ENCODE measurements at regions of chr6 and their contacts with region 1.

Region 1: DNA sequence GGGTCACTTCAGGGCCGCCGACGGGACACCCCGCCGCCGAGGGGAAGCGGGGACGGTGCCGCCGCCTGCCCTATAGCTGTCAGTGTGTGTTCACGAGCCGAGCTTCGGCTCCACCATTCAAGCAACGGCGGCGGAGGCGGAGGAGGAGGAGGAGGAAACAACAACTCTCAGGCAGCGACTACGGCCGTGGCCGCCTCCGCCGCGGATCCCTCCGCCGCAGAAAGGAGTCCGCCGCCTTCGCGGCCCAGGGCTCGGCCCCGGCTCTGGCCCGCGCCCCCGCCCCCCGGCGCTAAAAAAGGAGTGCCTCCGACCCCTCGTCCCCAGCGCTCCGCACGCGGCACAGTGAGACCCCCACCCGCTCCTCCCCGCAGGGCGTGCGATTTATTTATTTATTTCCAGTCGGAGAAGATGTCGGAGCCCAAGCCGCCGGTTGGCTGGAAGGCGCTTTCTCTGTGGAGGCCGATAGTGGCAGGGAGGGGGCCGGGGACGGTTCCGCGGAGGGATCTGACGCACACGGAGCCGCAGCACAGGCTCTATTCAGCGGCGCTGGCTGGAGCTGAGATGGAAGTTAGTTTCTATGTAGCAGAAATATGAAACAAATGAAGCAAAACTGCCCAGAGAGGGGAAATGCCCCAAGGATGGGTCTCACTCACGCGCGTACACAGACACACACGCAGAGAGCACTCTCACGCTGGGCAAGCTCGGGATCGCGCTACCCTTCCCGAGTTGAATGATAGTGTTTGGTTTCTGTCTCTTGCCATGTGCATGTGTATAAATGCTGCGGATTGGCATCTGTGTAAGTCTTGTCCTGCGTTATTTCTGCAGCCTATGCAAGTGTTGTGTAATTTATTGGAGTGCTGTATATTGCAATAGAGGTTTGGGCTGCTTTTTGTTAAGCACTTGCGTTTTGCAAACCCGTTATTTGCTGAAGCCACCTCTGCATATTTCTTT is at the start of gene PHIP:
- DNase-seq: peak; percentile 93 to 95
- ATAC-seq: peak; percentile 91 to 98 (median 94)
- H3K4me3 ChIP-seq: peak within 1 kb of the TSS; percentile 82 to 92 (median 88)
- H3K27ac ChIP-seq: peak within 1 kb of the TSS; percentile 94 to 99 (median 98)
- H3K4me1 ChIP-seq: peaks cover 0 to 43% (median 40%) of the 10 kb centered on the region in 9 donors
- H3K27me3 ChIP-seq: no peaks in the 10 kb centered on the region
- CTCF ChIP-seq: peak in 2 of 9 donors; percentile 5 to 10
- total RNA-seq, gene PHIP: 10.6 to 17.3 (median 16.1) TPM

Region 2: GRCh38 chr6:79145301-79145700 is 67.0 kb after region 1 on chr6:
- intact Hi-C with region 1: no loop called
- DNase-seq: no peak
- ATAC-seq: no peak
- H3K4me3 ChIP-seq: no peak overlapping the region
- H3K27ac ChIP-seq: no peak overlapping the region
- H3K4me1 ChIP-seq: peaks cover 0 to 6% (median 0%) of the 10 kb centered on the region in 9 donors
- H3K27me3 ChIP-seq: no peaks in the 10 kb centered on the region
- CTCF ChIP-seq: no peak

Region 3: GRCh38 chr6:79157960-79158644 is 79.8 kb after region 1 on chr6:
- intact Hi-C with region 1: no loop called
- DNase-seq: no peak
- ATAC-seq: no peak
- H3K4me3 ChIP-seq: no peak overlapping the region
- H3K27ac ChIP-seq: no peak overlapping the region
- H3K4me1 ChIP-seq: no peaks in the 10 kb centered on the region
- H3K27me3 ChIP-seq: no peaks in the 10 kb centered on the region
- CTCF ChIP-seq: no peak

Region 4: GRCh38 chr6:79239538-79240168 is 161.3 kb after region 1 on chr6:
- intact Hi-C with region 1: loop called in 6 of 10 experiments (anchors 1 to 5 kb)
- DNase-seq: no peak
- ATAC-seq: no peak
- H3K4me3 ChIP-seq: no peak overlapping the region
- H3K27ac ChIP-seq: no peak overlapping the region
- H3K4me1 ChIP-seq: peaks cover 0 to 17% (median 9%) of the 10 kb centered on the region in 9 donors
- H3K27me3 ChIP-seq: no peaks in the 10 kb centered on the region
- CTCF ChIP-seq: no peak

Region 5: DNA sequence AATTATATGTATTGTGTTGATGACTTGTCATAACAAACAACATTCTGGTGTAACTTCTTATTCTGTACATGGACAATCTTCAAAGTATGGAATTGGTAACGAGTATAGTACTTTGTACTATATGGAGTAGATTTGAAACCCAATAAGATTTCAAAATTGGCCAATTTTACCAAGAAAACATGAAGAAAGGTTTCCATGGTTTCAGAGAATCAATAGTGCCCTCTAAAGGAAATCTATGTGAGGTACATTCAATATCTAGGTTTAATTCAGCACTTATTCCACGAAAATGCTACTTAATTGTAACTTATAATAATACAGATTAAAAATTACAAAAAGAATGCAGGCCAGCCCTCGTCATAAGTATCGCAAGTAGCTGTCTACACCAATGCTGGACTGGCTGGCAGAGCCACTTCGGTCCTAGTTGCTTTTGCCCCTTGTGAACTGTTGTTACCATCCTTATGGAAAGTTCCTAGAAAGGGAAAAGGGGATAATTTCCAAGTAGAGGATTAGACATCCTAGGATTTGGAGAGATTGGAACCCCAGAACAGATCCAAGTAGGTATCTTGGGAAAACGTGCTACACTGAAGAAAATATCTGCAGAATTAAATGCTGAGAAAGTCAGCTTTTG is 388.0 kb after region 1 on chr6:
- intact Hi-C with region 1: loop called in 1 of 10 experiments (anchors 10 kb)
- DNase-seq: no peak
- ATAC-seq: no peak
- H3K4me3 ChIP-seq: no peak overlapping the region
- H3K27ac ChIP-seq: no peak overlapping the region
- H3K4me1 ChIP-seq: no peaks in the 10 kb centered on the region
- H3K27me3 ChIP-seq: no peaks in the 10 kb centered on the region
- CTCF ChIP-seq: peak; percentile 30 to 73 (median 54)

Region 6: GRCh38 chr6:79536954-79537747 is 458.8 kb after region 1 on chr6 and contains the start of gene LCA5:
- intact Hi-C with region 1: loop called in 4 of 10 experiments (anchors 1 to 5 kb)
- DNase-seq: peak; percentile 88 to 95
- ATAC-seq: peak; percentile 98 to 100 (median 99)
- H3K4me3 ChIP-seq: peak within 1 kb of the TSS; percentile 58 to 94 (median 78)
- H3K27ac ChIP-seq: peak within 1 kb of the TSS; percentile 57 to 93 (median 88)
- H3K4me1 ChIP-seq: peaks cover 0 to 31% (median 18%) of the 10 kb centered on the region in 9 donors
- H3K27me3 ChIP-seq: no peaks in the 10 kb centered on the region
- CTCF ChIP-seq: no peak
- total RNA-seq, gene LCA5: 1.4 to 2.7 (median 2.2) TPM